Activated T-helper 2 cell treated with anti-CD3 and anti-CD28 coated beads, Interferon-gamma antibody, Interleukin-2, Interleukin-4, amounts not matched to agents 10 μg/mL and 5 μg/mL and 100 μg/mL, durations not matched to agents 14 hours and 24 hours and 36 hours (primary cell): ENCODE measurements at regions of chr17 and their contacts with region 1.

Region 1: DNA sequence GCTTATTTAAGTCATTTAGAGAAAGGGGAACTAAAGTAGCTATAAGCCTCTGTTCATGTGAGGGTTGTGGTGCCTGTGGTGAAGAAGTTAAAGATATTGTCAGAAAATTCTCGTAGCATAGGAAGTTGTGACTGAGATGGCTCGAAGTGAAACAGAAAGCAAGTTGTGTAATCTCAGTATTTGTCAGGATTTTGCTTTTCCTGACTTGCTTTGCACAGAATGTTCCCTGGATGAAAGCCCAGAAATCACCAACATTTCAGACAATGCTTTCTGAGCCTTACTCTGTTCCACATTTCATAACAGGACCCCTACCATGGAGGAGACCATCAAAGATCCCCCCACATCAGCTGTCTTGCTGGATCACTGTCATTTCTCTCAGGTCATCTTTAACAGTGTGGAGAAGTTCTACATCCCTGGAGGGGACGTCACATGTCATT is 10.6 kb downstream of the CALCOCO2 start:
- DNase-seq: peak; percentile 38
- H3K4me3 Mint-ChIP-seq: peak overlapping the region; percentile 20
- H3K27ac Mint-ChIP-seq: peak overlapping the region; percentile 21
- H3K4me1 Mint-ChIP-seq: peaks cover 44% of the 10 kb centered on the region
- H3K27me3 Mint-ChIP-seq: no peaks in the 10 kb centered on the region

Region 2: GRCh38 chr17:48457080-48457836 is 384.2 kb before region 1 on chr17:
- intact Hi-C with region 1: no loop called
- DNase-seq: peak; percentile 68
- H3K4me3 Mint-ChIP-seq: peak overlapping the region; percentile 28
- H3K27ac Mint-ChIP-seq: no peak overlapping the region
- H3K4me1 Mint-ChIP-seq: peaks cover 62% of the 10 kb centered on the region
- H3K27me3 Mint-ChIP-seq: no peaks in the 10 kb centered on the region

Region 3: GRCh38 chr17:48856122-48856821 is 14.9 kb after region 1 on chr17:
- intact Hi-C with region 1: loop called (anchors 2 kb)
- DNase-seq: no peak
- H3K4me3 Mint-ChIP-seq: peak overlapping the region; percentile 15
- H3K27ac Mint-ChIP-seq: peak overlapping the region; percentile 51
- H3K4me1 Mint-ChIP-seq: peaks cover 33% of the 10 kb centered on the region
- H3K27me3 Mint-ChIP-seq: no peaks in the 10 kb centered on the region